ENCODE measurements at regions of chr9 and their contacts with region 1.

Region 1: GRCh38 chr9:130940693-130941576 is 1.9 kb upstream of the FIBCD1 start:
- DNase-seq: peak; percentile 43 to 95 (median 71)

Region 2: DNA sequence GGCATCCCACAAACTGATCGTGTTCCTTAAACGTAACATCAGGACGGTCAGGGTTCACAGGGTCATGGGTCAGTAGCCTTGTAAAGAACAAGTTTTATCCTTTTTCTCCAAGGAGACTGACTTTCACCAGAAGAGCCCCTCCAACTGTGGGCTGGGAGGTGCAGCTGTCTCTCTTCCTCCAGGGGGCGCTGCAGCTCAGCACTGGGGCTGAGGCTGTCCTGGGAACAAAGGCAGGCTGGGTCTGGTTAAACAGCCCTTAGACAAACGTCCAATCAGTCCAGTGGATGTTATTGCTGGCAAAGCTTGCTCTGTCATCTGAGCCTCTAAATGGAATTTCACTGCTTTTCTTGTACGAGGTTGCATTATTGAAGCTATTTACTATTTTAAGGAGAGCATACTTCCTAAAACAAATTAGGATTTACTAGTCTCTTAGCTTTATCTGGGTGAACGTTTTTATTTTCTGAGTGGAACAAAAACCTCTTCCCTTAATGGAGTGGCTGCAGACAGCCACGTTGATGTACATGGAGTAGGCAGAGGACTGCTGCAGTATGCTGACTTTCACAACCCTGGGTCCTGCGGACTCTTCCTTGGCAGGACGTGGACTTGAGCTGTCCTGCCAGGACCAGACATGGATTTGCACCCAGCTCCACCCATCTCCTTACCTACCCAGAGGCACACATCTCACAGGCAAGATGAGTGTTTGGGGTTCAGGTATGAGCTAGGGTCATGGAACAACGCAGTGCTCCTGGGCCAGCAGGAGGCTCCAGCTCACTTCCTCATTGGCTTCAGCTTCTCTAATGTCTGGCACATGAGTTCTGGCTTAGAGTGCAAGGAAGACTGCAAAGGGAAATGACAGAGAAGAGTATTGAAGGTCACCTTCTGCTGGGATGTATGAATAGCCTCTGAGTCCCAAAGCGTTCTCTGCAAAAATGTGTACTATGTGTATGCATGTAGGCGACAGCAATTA is 239.6 kb before region 1 on chr9:
- intact Hi-C with region 1: loop called (anchors 2 kb)
- DNase-seq: peak; percentile 43 to 96 (median 80)

Region 3: GRCh38 chr9:130712564-130713285 is 228.2 kb before region 1 on chr9:
- intact Hi-C with region 1: loop called (anchors 2 kb)
- DNase-seq: peak; percentile 95 to 100 (median 98)

Measured in posterior cingulate gyrus (tissue), 11 donors.